ENCODE measurements at regions of chr15 and their contacts with region 1.

Region 1: GRCh38 chr15:85380217-85380811 is at the start of gene AKAP13:
- DNase-seq: peak; percentile 78 to 93 (median 88)
- ATAC-seq: peak; percentile 87
- H3K4me3 ChIP-seq: peak within 1 kb of the TSS; percentile 62
- H3K4me3 Mint-ChIP-seq: peak within 1 kb of the TSS; percentile 86 to 96 (median 92)
- H3K27ac ChIP-seq: peak within 1 kb of the TSS; percentile 79
- H3K27ac Mint-ChIP-seq: peak within 1 kb of the TSS; percentile 84 to 96 (median 94)
- H3K4me1 ChIP-seq: peaks cover 16 to 23% of the 10 kb centered on the region in 2 donors
- H3K4me1 Mint-ChIP-seq: peaks cover 29 to 65% (median 47%) of the 10 kb centered on the region in 7 donors
- H3K27me3 ChIP-seq: no peaks in the 10 kb centered on the region
- H3K27me3 Mint-ChIP-seq: peaks cover 0 to 2% (median 0%) of the 10 kb centered on the region in 5 donors
- total RNA-seq, gene AKAP13: 170 to 400 (median 241) TPM

Region 2: GRCh38 chr15:83533410-83533962 is 1846.8 kb before region 1 on chr15:
- CTCF ChIA-PET with region 1: no interaction called
- POLR2A ChIA-PET with region 1: no interaction called
- intact Hi-C with region 1: no loop called
- DNase-seq: no peak
- ATAC-seq: no peak
- H3K4me3 ChIP-seq: no peak overlapping the region
- H3K4me3 Mint-ChIP-seq: no peak overlapping the region
- H3K27ac ChIP-seq: no peak overlapping the region
- H3K27ac Mint-ChIP-seq: no peak overlapping the region
- H3K4me1 ChIP-seq: no peaks in the 10 kb centered on the region
- H3K4me1 Mint-ChIP-seq: no peaks in the 10 kb centered on the region
- H3K27me3 ChIP-seq: no peaks in the 10 kb centered on the region
- H3K27me3 Mint-ChIP-seq: peaks cover 0 to 6% (median 0%) of the 10 kb centered on the region in 5 donors

Region 3: GRCh38 chr15:85318048-85318731 is 62.1 kb before region 1 on chr15:
- CTCF ChIA-PET with region 1: no interaction called
- POLR2A ChIA-PET with region 1: interaction called, 5 read pairs
- intact Hi-C with region 1: loop called (anchors 1 to 2 kb)
- DNase-seq: peak in 1 of 9 donors; percentile 29
- ATAC-seq: peak; percentile 61
- H3K4me3 ChIP-seq: no peak overlapping the region
- H3K4me3 Mint-ChIP-seq: peak overlapping the region in 2 of 10 donors; percentile 16 to 74
- H3K27ac ChIP-seq: no peak overlapping the region
- H3K27ac Mint-ChIP-seq: peak overlapping the region in 4 of 9 donors; percentile 22 to 90 (median 27)
- H3K4me1 ChIP-seq: peaks cover 28 to 29% of the 10 kb centered on the region in 2 donors
- H3K4me1 Mint-ChIP-seq: peaks cover 22 to 53% (median 35%) of the 10 kb centered on the region in 7 donors
- H3K27me3 ChIP-seq: no peaks in the 10 kb centered on the region
- H3K27me3 Mint-ChIP-seq: no peaks in the 10 kb centered on the region

Region 4: DNA sequence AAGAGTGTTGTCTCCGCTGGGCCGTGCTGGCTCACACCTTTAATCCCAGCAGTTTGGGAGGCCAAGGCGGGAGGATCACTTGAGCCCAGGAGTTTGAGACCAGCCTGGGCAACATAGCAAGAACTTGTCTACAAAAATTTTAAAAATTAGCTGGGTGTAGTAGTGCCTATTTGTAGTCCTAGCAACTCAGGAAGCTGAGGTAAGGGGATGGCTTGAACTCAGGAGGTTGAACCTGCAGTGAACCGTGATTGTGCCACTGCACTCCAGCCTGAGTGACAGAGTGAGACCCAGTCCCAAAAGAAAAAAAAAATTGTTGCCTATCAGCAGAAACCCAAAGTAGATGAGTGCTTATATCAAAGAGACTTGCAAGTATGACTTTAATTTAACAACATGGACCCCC is 12.6 kb before region 1 on chr15:
- CTCF ChIA-PET with region 1: interaction called, 4 read pairs
- POLR2A ChIA-PET with region 1: interaction called, 11 read pairs
- intact Hi-C with region 1: no loop called
- DNase-seq: peak in 2 of 9 donors; percentile 10 to 23
- ATAC-seq: no peak
- H3K4me3 ChIP-seq: no peak overlapping the region
- H3K4me3 Mint-ChIP-seq: peak overlapping the region in 3 of 10 donors; percentile 13 to 44 (median 19)
- H3K27ac ChIP-seq: no peak overlapping the region
- H3K27ac Mint-ChIP-seq: peak overlapping the region in 7 of 9 donors; percentile 7 to 74 (median 60)
- H3K4me1 ChIP-seq: no peaks in the 10 kb centered on the region
- H3K4me1 Mint-ChIP-seq: peaks cover 0 to 21% (median 10%) of the 10 kb centered on the region in 7 donors
- H3K27me3 ChIP-seq: no peaks in the 10 kb centered on the region
- H3K27me3 Mint-ChIP-seq: peaks cover 0 to 6% (median 0%) of the 10 kb centered on the region in 5 donors

Region 5: GRCh38 chr15:85407804-85408746 is 27.8 kb after region 1 on chr15:
- CTCF ChIA-PET with region 1: interaction called, 11 read pairs
- POLR2A ChIA-PET with region 1: interaction called, 23 read pairs
- intact Hi-C with region 1: loop called (anchors 1 kb)
- DNase-seq: peak in 2 of 9 donors; percentile 23 to 27
- ATAC-seq: peak; percentile 81
- H3K4me3 ChIP-seq: no peak overlapping the region
- H3K4me3 Mint-ChIP-seq: peak overlapping the region; percentile 0 to 81 (median 46)
- H3K27ac ChIP-seq: no peak overlapping the region
- H3K27ac Mint-ChIP-seq: peak overlapping the region; percentile 8 to 92 (median 83)
- H3K4me1 ChIP-seq: peaks cover 24 to 40% of the 10 kb centered on the region in 2 donors
- H3K4me1 Mint-ChIP-seq: peaks cover 43 to 91% (median 73%) of the 10 kb centered on the region in 7 donors
- H3K27me3 ChIP-seq: no peaks in the 10 kb centered on the region
- H3K27me3 Mint-ChIP-seq: no peaks in the 10 kb centered on the region

Region 6: GRCh38 chr15:85463276-85463892 is 83.1 kb after region 1 on chr15:
- CTCF ChIA-PET with region 1: no interaction called
- POLR2A ChIA-PET with region 1: no interaction called
- intact Hi-C with region 1: loop called in 1 of 2 experiments (anchors 5 kb)
- DNase-seq: no peak
- ATAC-seq: no peak
- H3K4me3 ChIP-seq: no peak overlapping the region
- H3K4me3 Mint-ChIP-seq: peak overlapping the region in 3 of 10 donors; percentile 0 to 8 (median 4)
- H3K27ac ChIP-seq: no peak overlapping the region
- H3K27ac Mint-ChIP-seq: peak overlapping the region in 4 of 9 donors; percentile 7 to 37 (median 24)
- H3K4me1 ChIP-seq: peaks cover 0 to 6% of the 10 kb centered on the region in 2 donors
- H3K4me1 Mint-ChIP-seq: peaks cover 35 to 70% (median 64%) of the 10 kb centered on the region in 7 donors
- H3K27me3 ChIP-seq: no peaks in the 10 kb centered on the region
- H3K27me3 Mint-ChIP-seq: no peaks in the 10 kb centered on the region

Region 7: GRCh38 chr15:85672332-85673084 is 292.2 kb after region 1 on chr15:
- CTCF ChIA-PET with region 1: no interaction called
- POLR2A ChIA-PET with region 1: no interaction called
- intact Hi-C with region 1: no loop called
- DNase-seq: no peak
- ATAC-seq: no peak
- H3K4me3 ChIP-seq: no peak overlapping the region
- H3K4me3 Mint-ChIP-seq: no peak overlapping the region
- H3K27ac ChIP-seq: no peak overlapping the region
- H3K27ac Mint-ChIP-seq: peak overlapping the region in 2 of 9 donors; percentile 18 to 42
- H3K4me1 ChIP-seq: peaks cover 8 to 9% of the 10 kb centered on the region in 2 donors
- H3K4me1 Mint-ChIP-seq: peaks cover 8 to 23% (median 14%) of the 10 kb centered on the region in 7 donors
- H3K27me3 ChIP-seq: no peaks in the 10 kb centered on the region
- H3K27me3 Mint-ChIP-seq: no peaks in the 10 kb centered on the region

Region 8: DNA sequence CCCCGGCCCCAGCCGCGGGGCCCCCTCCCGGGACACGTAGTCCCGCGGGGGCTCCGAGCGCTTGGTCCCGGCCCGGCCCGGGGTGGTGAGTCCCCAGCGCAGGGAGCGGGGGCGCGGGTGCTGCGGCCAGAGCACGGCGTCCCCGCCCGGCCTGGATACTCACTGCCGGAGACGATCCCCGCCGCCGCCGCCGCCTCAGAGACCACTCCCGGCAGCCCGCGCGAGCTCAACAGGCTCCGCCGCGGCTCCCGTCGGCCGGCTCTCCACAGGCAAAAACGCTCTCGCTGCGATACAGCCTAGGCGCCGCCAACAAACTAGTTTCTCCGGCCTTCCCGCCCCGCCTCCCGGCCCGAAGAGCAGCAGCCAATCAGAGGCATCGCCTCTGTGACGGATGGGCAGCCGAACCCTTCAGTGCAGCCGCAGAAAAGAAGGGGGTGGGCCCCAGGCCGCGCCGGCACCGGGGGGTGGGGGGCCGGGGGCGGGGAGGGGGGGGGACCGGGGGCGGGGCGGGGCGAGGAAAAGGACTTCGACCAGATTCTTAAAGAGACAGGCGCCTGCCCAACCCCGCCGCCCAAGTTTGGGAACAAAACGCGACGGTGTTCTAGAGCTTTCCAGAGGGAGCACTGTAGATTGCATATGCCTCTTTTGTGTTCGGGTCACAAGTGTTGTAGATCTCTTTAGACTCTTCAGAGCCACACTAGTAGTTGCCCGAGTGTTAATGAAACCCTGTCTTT is 414.5 kb after region 1 on chr15 and contains the start of gene KLHL25:
- CTCF ChIA-PET with region 1: no interaction called
- POLR2A ChIA-PET with region 1: no interaction called
- intact Hi-C with region 1: loop called in 1 of 2 experiments (anchors 10 kb)
- DNase-seq: peak; percentile 77 to 93 (median 91)
- ATAC-seq: peak; percentile 99
- H3K4me3 ChIP-seq: peak within 1 kb of the TSS; percentile 66
- H3K4me3 Mint-ChIP-seq: peak within 1 kb of the TSS; percentile 85 to 96 (median 94)
- H3K27ac ChIP-seq: peak within 1 kb of the TSS; percentile 84
- H3K27ac Mint-ChIP-seq: peak within 1 kb of the TSS; percentile 77 to 91 (median 86)
- H3K4me1 ChIP-seq: peaks cover 22 to 28% of the 10 kb centered on the region in 2 donors
- H3K4me1 Mint-ChIP-seq: peaks cover 26 to 49% (median 44%) of the 10 kb centered on the region in 7 donors
- H3K27me3 ChIP-seq: no peaks in the 10 kb centered on the region
- H3K27me3 Mint-ChIP-seq: peaks cover 0 to 3% (median 0%) of the 10 kb centered on the region in 5 donors
- total RNA-seq, gene KLHL25: 5.5 to 13.1 (median 10.6) TPM

Region 9: DNA sequence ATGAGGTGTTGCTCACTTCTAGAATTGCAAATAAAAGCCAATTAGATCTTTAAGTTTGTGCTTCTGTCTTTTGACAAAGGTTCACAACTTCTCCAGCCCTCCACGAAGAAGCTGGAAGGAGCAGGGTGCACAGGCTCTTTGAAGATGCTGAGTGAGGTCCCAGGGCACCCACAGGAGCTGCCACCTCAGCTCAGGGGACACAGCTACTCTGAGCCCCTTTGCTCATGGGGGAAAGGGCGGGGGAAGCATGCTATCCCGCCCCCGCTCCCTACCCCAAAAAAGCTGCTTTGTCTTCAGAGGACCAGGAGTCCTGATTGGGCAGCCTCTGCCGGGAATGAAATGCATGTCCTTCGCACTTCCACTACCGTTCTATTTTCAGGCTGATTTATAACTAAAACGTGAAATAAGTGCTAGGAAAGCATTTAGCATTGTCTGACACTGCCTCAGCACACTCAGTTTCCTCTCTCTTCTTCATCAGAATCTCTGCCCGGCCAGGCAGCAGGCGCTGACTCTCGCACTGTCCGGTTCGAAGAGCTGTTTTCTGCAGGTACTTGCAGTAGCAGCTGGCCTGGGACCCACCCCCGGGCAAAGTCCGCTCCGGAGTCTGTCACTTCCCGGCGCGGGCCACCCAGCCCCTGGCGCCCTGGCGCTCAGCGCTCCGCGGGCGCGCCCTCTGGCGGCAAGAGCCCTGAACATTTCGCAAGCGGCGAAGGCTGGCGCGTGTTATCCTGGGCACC is 459.9 kb after region 1 on chr15:
- CTCF ChIA-PET with region 1: no interaction called
- POLR2A ChIA-PET with region 1: no interaction called
- intact Hi-C with region 1: no loop called
- DNase-seq: peak; percentile 55 to 87 (median 75)
- ATAC-seq: peak; percentile 95
- H3K4me3 ChIP-seq: peak overlapping the region; percentile 36
- H3K4me3 Mint-ChIP-seq: peak overlapping the region; percentile 34 to 82 (median 71)
- H3K27ac ChIP-seq: no peak overlapping the region
- H3K27ac Mint-ChIP-seq: peak overlapping the region in 1 of 9 donors; percentile 36
- H3K4me1 ChIP-seq: peaks cover 0 to 3% of the 10 kb centered on the region in 2 donors
- H3K4me1 Mint-ChIP-seq: peaks cover 2 to 9% (median 6%) of the 10 kb centered on the region in 7 donors
- H3K27me3 ChIP-seq: no peaks in the 10 kb centered on the region
- H3K27me3 Mint-ChIP-seq: peaks cover 0 to 9% (median 6%) of the 10 kb centered on the region in 5 donors

Measured in naive thymus-derived CD4-positive, alpha-beta T cell (primary cell).